ENCODE measurements at regions of chr3 and their contacts with region 1.

Region 1: DNA sequence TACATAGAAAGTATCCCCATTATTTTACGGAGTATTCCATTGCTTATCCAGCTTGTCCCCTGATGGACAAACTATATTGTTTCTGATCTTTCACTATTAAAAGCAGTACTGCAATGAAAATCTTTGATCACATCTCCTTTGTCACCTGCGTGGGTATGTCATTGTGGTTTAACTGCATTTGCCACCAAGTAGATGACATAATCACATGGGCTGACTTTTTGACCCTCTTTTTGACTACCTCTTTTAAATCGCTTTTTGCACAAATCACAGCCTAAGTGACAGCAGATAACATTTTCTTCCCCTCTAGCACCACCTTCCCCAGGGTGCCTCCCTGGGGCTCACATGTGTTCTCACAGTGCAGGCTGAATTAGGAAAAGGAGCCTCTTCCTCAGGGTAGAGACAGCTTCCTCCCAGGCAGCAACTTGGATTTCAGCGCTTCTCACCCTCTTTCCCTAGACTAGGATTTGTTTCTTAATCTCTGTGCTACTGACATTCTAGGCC is 1.2 kb upstream of the RBP1 start:
- DNase-seq: no peak
- H3K4me3 ChIP-seq: no peak overlapping the region
- H3K27ac ChIP-seq: no peak overlapping the region
- H3K4me1 ChIP-seq: peaks cover 29% of the 10 kb centered on the region
- H3K27me3 ChIP-seq: no peaks in the 10 kb centered on the region
- CTCF ChIP-seq: no peak

Region 2: GRCh38 chr3:139434764-139435307 is 105.9 kb before region 1 on chr3:
- CTCF ChIA-PET with region 1: no interaction called
- dilution Hi-C with region 1: no loop called
- in situ Hi-C with region 1: loop called in 1 of 2 experiments (anchors 10 kb)
- intact Hi-C with region 1: no loop called
- DNase-seq: peak; percentile 92
- H3K4me3 ChIP-seq: no peak overlapping the region
- H3K27ac ChIP-seq: peak overlapping the region; percentile 11
- H3K4me1 ChIP-seq: peaks cover 19% of the 10 kb centered on the region
- H3K27me3 ChIP-seq: no peaks in the 10 kb centered on the region
- CTCF ChIP-seq: peak; percentile 31 to 67

Measured in mammary epithelial cell (primary cell).